ENCODE measurements at regions of chr3 and their contacts with region 1.

Region 1: GRCh38 chr3:140941434-140942220 is at the start of gene SLC25A36:
- DNase-seq: peak; percentile 96
- ATAC-seq: peak; percentile 93
- H3K4me3 ChIP-seq: peak within 1 kb of the TSS; percentile 92
- H3K27ac ChIP-seq: peak within 1 kb of the TSS; percentile 49; the same call in 1 of the 2 replicates
- H3K4me1 ChIP-seq: peaks cover 13% of the 10 kb centered on the region; the same call in 1 of the 2 replicates
- H3K27me3 ChIP-seq: no peaks in the 10 kb centered on the region
- CTCF ChIP-seq: no peak
- total RNA-seq, gene SLC25A36: 41.7 and 57.3 TPM in 2 replicates

Region 2: GRCh38 chr3:140956058-140956835 is 14.6 kb after region 1 on chr3:
- CTCF ChIA-PET with region 1: no interaction called
- POLR2A ChIA-PET with region 1: interaction called, 3 read pairs
- intact Hi-C with region 1: loop called (anchors 2 kb)
- DNase-seq: no peak
- ATAC-seq: no peak
- H3K4me3 ChIP-seq: no peak overlapping the region
- H3K27ac ChIP-seq: peak overlapping the region; percentile 26
- H3K4me1 ChIP-seq: peaks cover 37% of the 10 kb centered on the region
- H3K27me3 ChIP-seq: no peaks in the 10 kb centered on the region
- CTCF ChIP-seq: no peak

Measured in PC-3 (cell line).